Activated T-helper 1 cell treated with anti-CD3 and anti-CD28 coated beads, Interleukin-12 subunit alpha, Interleukin-12 subunit beta, Interleukin-2, Interleukin-4 antibody, amounts not matched to agents 30 ng/mL and 10 ng/mL and 1 ng/mL, durations not matched to agents 14 hours and 24 hours and 36 hours (primary cell): ENCODE measurements at regions of chr19 and their contacts with region 1.

Region 1: GRCh38 chr19:4065430-4066175 is 1.1 kb downstream of the ZBTB7A start:
- DNase-seq: peak; percentile 97
- H3K4me3 Mint-ChIP-seq: peak overlapping the region; percentile 64
- H3K27ac Mint-ChIP-seq: no peak overlapping the region
- H3K4me1 Mint-ChIP-seq: peaks cover 16% of the 10 kb centered on the region
- H3K27me3 Mint-ChIP-seq: no peaks in the 10 kb centered on the region

Region 2: GRCh38 chr19:4007021-4007835 is 58.4 kb before region 1 on chr19 and contains the start of gene PIAS4:
- intact Hi-C with region 1: loop called (anchors 1 kb)
- DNase-seq: peak; percentile 94
- H3K4me3 Mint-ChIP-seq: peak within 1 kb of the TSS; percentile 90
- H3K27ac Mint-ChIP-seq: peak within 1 kb of the TSS; percentile 84
- H3K4me1 Mint-ChIP-seq: peaks cover 18% of the 10 kb centered on the region
- H3K27me3 Mint-ChIP-seq: no peaks in the 10 kb centered on the region
- total RNA-seq, gene PIAS4: 37.6 and 41.0 TPM in 2 replicates

Region 3: DNA sequence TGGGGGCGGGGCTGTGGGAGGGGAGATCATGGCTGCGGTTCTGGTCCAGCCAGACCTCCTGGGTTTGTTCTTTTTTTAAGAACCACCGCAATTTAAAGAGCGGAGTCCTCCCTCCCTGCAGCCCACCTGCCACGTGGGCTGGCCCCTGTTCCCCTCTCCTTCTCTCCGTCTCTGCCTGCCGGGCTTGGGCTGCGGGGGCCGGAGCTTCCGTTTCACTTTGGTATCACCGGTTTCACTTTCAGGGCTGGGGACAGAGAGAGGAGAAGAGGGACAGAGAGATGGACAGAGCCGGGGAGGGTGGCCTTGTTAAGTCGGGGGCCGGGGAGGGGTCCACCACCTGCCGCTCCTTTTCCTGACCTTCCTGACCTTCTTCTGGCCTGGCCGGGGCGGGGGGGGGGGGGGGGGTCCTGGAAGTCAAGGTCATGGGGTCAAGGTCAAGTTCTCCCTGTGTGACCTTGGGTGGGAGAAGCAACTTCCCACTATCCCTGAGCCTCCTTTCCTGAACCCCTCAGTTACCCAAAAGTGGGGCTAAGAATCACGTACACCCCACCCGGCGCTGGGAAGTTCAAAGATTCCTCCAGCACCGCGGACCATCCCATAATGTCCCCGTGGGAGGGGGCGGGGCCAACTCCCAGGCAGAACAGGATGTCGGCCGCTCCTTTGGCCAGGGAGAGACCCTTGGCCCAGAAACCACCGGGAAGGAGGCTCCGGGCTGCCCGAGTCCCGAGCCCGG is 12.4 kb after region 1 on chr19:
- intact Hi-C with region 1: loop called (anchors 1 kb)
- DNase-seq: peak; percentile 41
- H3K4me3 Mint-ChIP-seq: peak overlapping the region; percentile 61
- H3K27ac Mint-ChIP-seq: peak overlapping the region; percentile 83
- H3K4me1 Mint-ChIP-seq: peaks cover 32% of the 10 kb centered on the region
- H3K27me3 Mint-ChIP-seq: no peaks in the 10 kb centered on the region

Region 4: GRCh38 chr19:4089400-4089908 is 23.9 kb after region 1 on chr19:
- intact Hi-C with region 1: loop called (anchors 1 kb)
- DNase-seq: peak; percentile 69
- H3K4me3 Mint-ChIP-seq: peak overlapping the region; percentile 78
- H3K27ac Mint-ChIP-seq: peak overlapping the region; percentile 94
- H3K4me1 Mint-ChIP-seq: peaks cover 18% of the 10 kb centered on the region
- H3K27me3 Mint-ChIP-seq: no peaks in the 10 kb centered on the region

Region 5: GRCh38 chr19:4123615-4124568 is 58.3 kb after region 1 on chr19 and contains the start of gene MAP2K2:
- intact Hi-C with region 1: loop called (anchors 1 kb)
- DNase-seq: peak; percentile 94
- H3K4me3 Mint-ChIP-seq: peak within 1 kb of the TSS; percentile 100
- H3K27ac Mint-ChIP-seq: peak within 1 kb of the TSS; percentile 98
- H3K4me1 Mint-ChIP-seq: peaks cover 17% of the 10 kb centered on the region
- H3K27me3 Mint-ChIP-seq: no peaks in the 10 kb centered on the region
- total RNA-seq, gene MAP2K2: 131 and 135 TPM in 2 replicates

Region 6: DNA sequence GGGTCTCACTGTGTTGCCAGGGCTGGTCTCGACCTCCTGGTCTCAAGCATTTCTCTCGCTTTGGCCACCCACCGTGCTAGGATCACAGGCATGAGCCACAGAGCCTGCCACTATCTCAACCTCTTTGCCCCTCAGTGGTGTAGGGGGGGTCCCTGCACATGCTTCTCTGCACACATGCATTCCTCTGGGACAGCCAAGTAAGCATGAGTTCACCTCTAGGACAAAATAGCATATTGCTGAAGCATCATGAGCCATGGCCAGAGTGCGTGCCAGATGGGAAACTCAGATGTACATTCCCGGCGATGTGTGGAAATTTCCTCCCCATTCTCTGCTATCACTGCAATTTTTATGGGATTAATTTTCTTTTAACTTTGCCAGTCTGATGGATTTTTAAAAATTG is 359.9 kb after region 1 on chr19:
- intact Hi-C with region 1: no loop called
- DNase-seq: no peak
- H3K4me3 Mint-ChIP-seq: no peak overlapping the region
- H3K27ac Mint-ChIP-seq: no peak overlapping the region
- H3K4me1 Mint-ChIP-seq: no peaks in the 10 kb centered on the region
- H3K27me3 Mint-ChIP-seq: no peaks in the 10 kb centered on the region

Region 7: GRCh38 chr19:4589579-4590410 is 524.2 kb after region 1 on chr19:
- intact Hi-C with region 1: no loop called
- DNase-seq: no peak
- H3K4me3 Mint-ChIP-seq: no peak overlapping the region
- H3K27ac Mint-ChIP-seq: no peak overlapping the region
- H3K4me1 Mint-ChIP-seq: no peaks in the 10 kb centered on the region
- H3K27me3 Mint-ChIP-seq: peaks cover 48% of the 10 kb centered on the region